Activated T-helper 2 cell treated with anti-CD3 and anti-CD28 coated beads, Interferon-gamma antibody, Interleukin-2, Interleukin-4, amounts not matched to agents 10 μg/mL and 5 μg/mL and 100 μg/mL, durations not matched to agents 14 hours and 24 hours and 36 hours (primary cell): ENCODE measurements at regions of chr3 and their contacts with region 1.

Region 1: GRCh38 chr3:112327371-112327951 is 5.5 kb upstream of the CD200 start:
- DNase-seq: peak; percentile 28
- H3K4me3 Mint-ChIP-seq: no peak overlapping the region
- H3K27ac Mint-ChIP-seq: no peak overlapping the region
- H3K4me1 Mint-ChIP-seq: peaks cover 3% of the 10 kb centered on the region
- H3K27me3 Mint-ChIP-seq: peaks cover 2% of the 10 kb centered on the region

Region 2: DNA sequence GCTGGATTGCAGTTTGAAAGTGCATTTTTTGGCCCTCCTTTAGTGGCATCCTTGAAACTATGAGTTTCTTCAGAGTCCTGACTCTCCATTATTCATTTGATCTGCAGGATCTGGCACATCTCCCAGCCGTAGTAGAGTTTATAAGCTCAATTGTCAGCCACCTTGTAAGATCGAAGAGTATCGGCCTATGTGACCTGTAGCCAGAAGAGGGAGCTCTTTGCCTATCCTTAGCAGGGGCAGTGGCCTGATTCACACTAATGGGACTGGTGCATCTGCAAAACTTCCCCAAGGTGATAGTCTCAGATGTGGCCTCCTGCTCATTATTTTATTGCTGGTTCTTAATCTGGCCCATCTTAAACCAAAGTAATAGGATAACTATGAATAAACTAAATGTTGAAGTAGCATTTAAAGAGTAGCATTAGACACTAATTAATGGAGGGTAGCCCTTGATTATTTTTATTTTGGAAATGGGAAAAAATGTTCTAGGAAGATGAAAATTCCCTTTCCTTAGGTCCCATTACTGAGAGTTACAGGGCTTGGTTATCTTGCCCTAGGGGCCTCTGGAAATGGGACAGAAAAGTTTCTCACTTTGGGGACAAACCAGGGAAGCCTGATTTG is 215.6 kb before region 1 on chr3:
- intact Hi-C with region 1: loop called (anchors 2 kb)
- DNase-seq: peak; percentile 53
- H3K4me3 Mint-ChIP-seq: no peak overlapping the region
- H3K27ac Mint-ChIP-seq: no peak overlapping the region
- H3K4me1 Mint-ChIP-seq: peaks cover 10% of the 10 kb centered on the region
- H3K27me3 Mint-ChIP-seq: no peaks in the 10 kb centered on the region

Region 3: GRCh38 chr3:112293368-112294321 is 33.8 kb before region 1 on chr3 and contains the start of gene SLC9C1:
- intact Hi-C with region 1: loop called (anchors 5 kb)
- DNase-seq: peak; percentile 28
- H3K4me3 Mint-ChIP-seq: peak within 1 kb of the TSS; percentile 70
- H3K27ac Mint-ChIP-seq: peak within 1 kb of the TSS; percentile 83
- H3K4me1 Mint-ChIP-seq: peaks cover 45% of the 10 kb centered on the region
- H3K27me3 Mint-ChIP-seq: no peaks in the 10 kb centered on the region
- total RNA-seq, gene SLC9C1: 0.37 TPM in 1 of 2 replicates, not detected in the other

Region 4: DNA sequence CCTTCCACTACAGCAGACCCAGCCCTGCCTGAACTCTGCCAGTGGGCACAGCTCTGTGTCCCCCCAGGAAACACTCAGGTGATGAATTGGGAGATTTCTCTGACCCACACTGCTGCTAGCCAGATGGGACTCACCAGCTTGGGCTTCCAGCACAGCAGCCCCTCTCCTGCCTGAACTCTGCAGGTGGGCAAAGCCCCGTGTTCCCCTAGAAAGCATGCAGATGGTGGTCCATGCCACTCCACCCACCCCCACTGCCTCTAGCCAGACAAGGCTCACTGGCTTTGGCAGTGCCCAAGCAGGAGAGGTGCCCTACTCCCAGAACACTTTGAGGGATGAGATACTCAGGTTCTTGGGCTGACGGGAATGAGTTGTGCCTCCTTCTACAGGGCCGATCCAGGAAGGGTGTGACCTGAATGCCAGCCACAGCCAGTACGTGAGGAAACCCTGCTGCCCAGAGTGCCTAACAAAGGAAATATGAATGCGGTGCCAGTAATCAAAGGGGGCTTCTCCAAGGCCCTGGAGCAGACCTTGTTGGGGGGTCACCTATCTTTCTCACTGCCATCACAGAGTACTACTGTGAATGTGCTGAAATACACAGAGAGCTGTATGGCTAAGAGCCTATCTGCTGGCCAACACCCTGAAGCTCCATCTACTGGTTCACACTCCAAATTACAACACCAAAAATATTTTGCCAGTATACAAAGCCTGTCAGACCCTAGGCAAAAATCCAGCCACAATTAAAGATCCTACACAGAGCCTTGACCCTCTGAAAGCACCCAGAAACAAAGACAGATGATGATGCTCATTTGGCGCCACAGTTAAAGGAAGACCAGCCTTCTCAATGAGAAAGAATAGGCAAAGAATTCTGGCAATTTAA is 109.9 kb after region 1 on chr3:
- intact Hi-C with region 1: loop called (anchors 1 kb)
- DNase-seq: no peak
- H3K4me3 Mint-ChIP-seq: no peak overlapping the region
- H3K27ac Mint-ChIP-seq: no peak overlapping the region
- H3K4me1 Mint-ChIP-seq: peaks cover 54% of the 10 kb centered on the region
- H3K27me3 Mint-ChIP-seq: no peaks in the 10 kb centered on the region

Region 5: GRCh38 chr3:112531358-112531781 is 203.9 kb after region 1 on chr3:
- intact Hi-C with region 1: loop called (anchors 2 kb)
- DNase-seq: no peak
- H3K4me3 Mint-ChIP-seq: no peak overlapping the region
- H3K27ac Mint-ChIP-seq: no peak overlapping the region
- H3K4me1 Mint-ChIP-seq: peaks cover 4% of the 10 kb centered on the region
- H3K27me3 Mint-ChIP-seq: no peaks in the 10 kb centered on the region